Lower leg skin (tissue), 4 donors: ENCODE measurements at regions of chr6 and their contacts with region 1.

Region 1: DNA sequence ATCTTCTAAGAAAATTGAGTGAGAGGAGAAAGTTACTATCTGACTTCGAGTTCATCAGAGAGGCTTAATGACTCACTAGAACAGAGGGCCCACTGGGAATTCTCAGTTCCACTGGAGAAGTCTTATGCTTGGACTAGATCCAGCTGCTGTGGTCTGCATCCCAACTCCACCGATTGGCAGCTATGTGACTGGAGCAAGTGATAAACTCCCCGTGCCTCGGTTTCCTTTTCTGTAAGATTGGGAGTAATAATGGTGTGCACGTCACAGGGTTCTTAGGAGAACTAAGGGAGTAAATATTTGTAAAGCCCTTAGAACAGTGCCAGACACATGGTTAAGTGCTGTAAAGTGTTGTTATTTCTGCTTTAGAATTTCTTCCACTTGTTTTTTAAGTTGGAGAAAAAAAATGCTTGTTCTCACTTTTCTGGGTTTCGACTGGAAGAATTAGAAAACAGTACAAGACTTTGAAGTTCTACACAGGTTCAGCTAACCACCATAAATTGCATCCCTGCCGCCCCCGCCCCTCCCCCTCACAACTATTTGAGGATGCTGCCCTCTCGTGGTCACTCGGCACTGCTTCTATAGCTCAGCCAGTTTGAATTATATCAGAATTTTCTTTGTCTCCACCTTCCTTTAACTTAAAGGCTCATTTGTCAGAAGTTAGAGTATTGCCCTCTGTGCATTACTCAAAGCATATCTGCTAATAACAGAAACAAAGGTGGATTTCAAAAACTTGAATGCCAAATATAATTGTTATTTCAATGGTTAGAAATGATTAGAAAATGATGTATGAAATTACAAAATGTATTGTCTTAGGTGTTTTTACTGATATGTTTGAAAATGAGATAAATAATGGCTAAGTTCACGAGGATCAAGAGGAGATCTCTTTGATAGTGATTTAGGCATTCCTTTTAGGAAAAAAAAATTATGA is 95.0 kb upstream of the IFNGR1 start:
- DNase-seq: peak; percentile 53 to 93
- H3K4me3 ChIP-seq: no peak overlapping the region
- CTCF ChIP-seq: no peak
- POLR2A ChIP-seq: no peak

Region 2: GRCh38 chr6:137094411-137095008 is 219.7 kb before region 1 on chr6:
- intact Hi-C with region 1: loop called (anchors 10 kb)
- DNase-seq: peak; percentile 81 to 88
- H3K4me3 ChIP-seq: no peak overlapping the region
- CTCF ChIP-seq: peak in 1 of 3 donors; percentile 65
- POLR2A ChIP-seq: no peak

Region 3: GRCh38 chr6:137271245-137272183 is 42.7 kb before region 1 on chr6:
- intact Hi-C with region 1: loop called (anchors 2 kb)
- DNase-seq: no peak
- H3K4me3 ChIP-seq: no peak overlapping the region
- CTCF ChIP-seq: peak in 1 of 3 donors; percentile 75
- POLR2A ChIP-seq: no peak

Region 4: DNA sequence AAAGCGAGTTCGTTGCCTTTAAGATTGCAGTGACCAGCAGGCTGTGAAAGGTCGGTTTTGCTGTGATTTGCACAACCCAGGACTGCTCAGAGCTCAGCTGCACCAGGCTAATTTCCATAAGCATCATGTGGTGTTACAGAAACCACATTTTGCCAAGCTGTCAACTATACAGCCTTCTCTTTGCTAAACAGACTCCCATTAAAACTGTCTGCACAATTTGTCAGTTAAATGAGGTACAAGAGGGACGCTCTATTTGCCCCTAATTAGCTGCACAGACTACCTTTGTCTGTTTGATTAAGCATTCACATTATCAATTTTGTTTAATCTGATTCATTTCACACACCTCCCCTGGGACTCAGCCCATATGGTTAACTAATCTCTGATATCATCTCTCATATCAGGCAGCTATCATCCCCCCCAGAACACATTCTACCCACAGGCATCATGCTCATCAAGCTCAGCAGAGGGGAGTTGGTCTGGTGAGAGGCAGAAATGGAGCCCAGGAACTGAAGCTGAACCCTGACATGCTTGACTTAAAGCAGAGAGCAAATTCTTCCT is 117.9 kb after region 1 on chr6:
- intact Hi-C with region 1: no loop called
- DNase-seq: no peak
- H3K4me3 ChIP-seq: no peak overlapping the region
- CTCF ChIP-seq: no peak
- POLR2A ChIP-seq: no peak